ENCODE measurements at regions of chr11 and their contacts with region 1.

Region 1: DNA sequence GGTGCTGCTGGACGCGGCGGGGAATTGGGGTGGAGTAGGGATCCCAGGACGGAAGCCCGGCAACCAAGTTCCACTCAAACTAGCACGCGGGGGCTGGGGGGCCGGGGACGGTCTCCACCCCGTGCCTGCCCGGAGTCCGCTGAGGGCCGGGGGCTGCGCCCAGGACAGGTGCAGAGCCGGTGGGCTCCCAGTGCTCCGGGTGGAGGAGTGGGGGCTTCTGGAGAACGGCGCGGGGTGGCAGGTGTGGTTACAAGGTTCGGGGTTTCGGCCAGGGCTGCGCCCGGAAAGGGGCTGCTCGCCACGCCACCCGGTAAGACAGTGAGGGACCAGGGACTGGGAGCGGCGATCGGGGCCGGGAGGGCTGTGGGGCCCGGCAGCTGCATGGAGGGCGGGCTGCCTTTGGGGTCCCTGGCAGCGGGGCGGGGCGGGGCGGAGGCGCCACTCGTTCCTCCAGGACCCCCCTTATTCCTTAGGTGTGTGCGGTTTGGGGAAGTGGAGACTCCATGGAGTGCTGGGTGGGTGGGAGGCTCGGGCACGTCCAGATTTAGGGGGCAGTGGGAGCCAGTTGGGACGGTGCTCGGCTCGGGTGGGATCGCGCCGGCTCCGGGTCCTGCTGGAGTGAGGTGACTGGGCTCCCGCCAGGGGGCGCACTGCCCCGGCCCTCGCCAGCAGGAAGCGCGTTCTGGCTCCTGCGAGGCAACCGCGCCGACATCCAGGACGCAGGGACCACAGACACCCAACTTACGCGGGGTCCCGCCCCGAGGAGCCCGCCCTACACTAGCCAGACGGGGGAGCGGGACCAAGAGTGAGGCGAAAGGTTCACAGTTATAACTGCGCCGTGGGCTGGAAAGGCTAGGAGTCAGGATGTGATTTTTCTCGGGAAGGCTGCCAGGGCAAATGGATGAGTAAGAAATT is 868 bp downstream of the TSPAN18 start:
- DNase-seq: peak; percentile 16
- ATAC-seq: peak; percentile 93
- H3K4me3 ChIP-seq: peak overlapping the region in 1 of 3 experiments; percentile 33; a peak in 1 of 6 replicates
- H3K27ac ChIP-seq: no peak overlapping the region
- H3K4me1 ChIP-seq: no peaks in the 10 kb centered on the region
- H3K27me3 ChIP-seq: peaks cover 7 to 40% of the 10 kb centered on the region in 2 experiments; a peak in 4 of 5 replicates
- CTCF ChIP-seq: peak; percentile 88
- EP300 ChIP-seq: no peak
- POLR2A ChIP-seq: no peak
- RAD21 ChIP-seq: peak; percentile 70

Region 2: GRCh38 chr11:44893846-44894617 is 166.4 kb after region 1 on chr11:
- CTCF ChIA-PET with region 1: no interaction called
- POLR2A ChIA-PET with region 1: no interaction called
- in situ Hi-C with region 1: loop called (anchors 5 kb)
- intact Hi-C with region 1: no loop called
- DNase-seq: peak; percentile 24
- ATAC-seq: peak; percentile 96
- H3K4me3 ChIP-seq: no peak overlapping the region
- H3K27ac ChIP-seq: no peak overlapping the region
- H3K4me1 ChIP-seq: no peaks in the 10 kb centered on the region
- H3K27me3 ChIP-seq: peaks cover 0 to 1% of the 10 kb centered on the region in 2 experiments; a peak in 1 of 5 replicates
- CTCF ChIP-seq: peak; percentile 86
- EP300 ChIP-seq: no peak
- POLR2A ChIP-seq: no peak
- RAD21 ChIP-seq: peak; percentile 70; the same call in 1 of the 2 replicates

Region 3: DNA sequence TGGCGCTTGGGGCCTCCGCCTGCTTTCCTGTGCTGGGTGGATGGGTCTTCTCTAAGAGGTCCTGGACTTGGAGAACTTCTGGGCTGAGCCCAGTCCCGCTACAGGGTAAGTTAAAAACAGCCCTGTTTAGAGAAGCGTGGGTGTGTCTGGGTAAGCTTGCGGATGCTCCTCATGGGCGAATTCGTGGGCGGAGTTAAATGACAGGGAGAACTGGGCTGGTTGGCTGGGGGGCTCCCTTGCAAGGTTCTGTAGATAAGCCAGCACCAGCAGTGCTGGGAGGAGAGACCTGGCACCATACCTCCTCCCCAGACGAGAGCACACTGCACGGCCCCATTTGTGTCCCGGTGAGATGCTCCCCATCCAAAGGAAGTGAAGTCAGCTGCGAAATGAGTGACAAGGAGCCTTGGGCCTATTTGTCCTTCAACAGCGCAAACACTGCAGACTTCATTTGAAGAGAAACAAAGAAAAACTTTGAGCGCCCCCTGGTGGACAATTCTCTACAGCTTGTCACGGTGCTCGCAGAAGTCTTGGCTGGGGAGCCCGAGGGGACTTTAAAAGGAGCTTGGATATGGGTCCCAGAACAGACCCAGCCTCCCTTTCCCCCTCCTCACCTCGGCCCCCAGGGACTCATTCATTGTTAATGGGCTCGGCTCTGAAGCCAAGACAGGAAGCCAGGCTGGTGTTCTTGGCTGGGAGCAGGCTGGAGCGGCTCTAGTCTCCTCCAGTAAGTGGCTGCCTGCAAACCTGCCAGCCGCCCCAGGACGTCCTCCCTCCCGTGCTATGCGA is 183.6 kb after region 1 on chr11:
- CTCF ChIA-PET with region 1: interaction called, 4 read pairs
- POLR2A ChIA-PET with region 1: no interaction called
- in situ Hi-C with region 1: no loop called
- intact Hi-C with region 1: loop called (anchors 5 kb)
- DNase-seq: peak; percentile 61
- ATAC-seq: peak; percentile 86
- H3K4me3 ChIP-seq: no peak overlapping the region
- H3K27ac ChIP-seq: no peak overlapping the region
- H3K4me1 ChIP-seq: no peaks in the 10 kb centered on the region
- H3K27me3 ChIP-seq: peaks cover 0 to 29% of the 10 kb centered on the region in 2 experiments; a peak in 2 of 5 replicates
- CTCF ChIP-seq: peak; percentile 70
- EP300 ChIP-seq: no peak
- POLR2A ChIP-seq: no peak
- RAD21 ChIP-seq: peak; percentile 33; the same call in 1 of the 2 replicates

Region 4: DNA sequence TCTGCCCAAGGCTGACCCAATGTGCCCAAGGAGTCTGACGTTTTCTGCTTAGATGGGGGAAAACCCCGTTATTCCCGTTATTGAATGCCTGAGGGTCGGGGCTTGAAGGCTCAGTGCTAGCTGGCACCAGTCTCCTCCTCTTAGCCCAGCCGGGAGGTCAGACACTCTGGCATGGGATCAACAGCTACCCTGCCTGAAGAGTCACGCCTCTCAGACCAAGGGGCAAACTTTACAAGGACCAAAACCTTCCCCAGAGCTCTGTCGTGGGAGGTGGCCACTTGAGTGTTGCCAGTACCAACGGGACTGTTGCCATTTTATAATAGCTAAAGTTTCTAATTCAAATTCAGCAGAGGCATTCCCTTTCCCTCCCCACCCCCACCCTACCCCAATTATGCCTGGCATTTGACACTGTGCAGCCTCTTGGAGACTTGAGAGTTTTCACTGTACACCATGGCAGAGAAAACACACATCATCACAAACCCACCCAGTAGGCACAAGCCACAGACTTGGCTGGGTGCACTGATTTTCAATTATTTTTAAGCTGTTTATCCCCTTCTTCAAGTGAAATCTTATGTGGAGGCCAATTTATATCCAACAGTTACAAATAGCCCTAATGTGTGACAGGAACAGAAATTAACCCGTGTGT is 696.0 kb after region 1 on chr11:
- CTCF ChIA-PET with region 1: no interaction called
- POLR2A ChIA-PET with region 1: no interaction called
- in situ Hi-C with region 1: no loop called
- intact Hi-C with region 1: no loop called
- DNase-seq: no peak
- ATAC-seq: no peak
- H3K4me3 ChIP-seq: no peak overlapping the region
- H3K27ac ChIP-seq: no peak overlapping the region
- H3K4me1 ChIP-seq: no peaks in the 10 kb centered on the region
- H3K27me3 ChIP-seq: peaks cover 0 to 12% of the 10 kb centered on the region in 2 experiments; a peak in 4 of 5 replicates
- CTCF ChIP-seq: no peak
- EP300 ChIP-seq: no peak
- POLR2A ChIP-seq: no peak
- RAD21 ChIP-seq: no peak